ENCODE measurements at regions of chr14 and their contacts with region 1.

Region 1: GRCh38 chr14:78848234-78848820 is 678.2 kb downstream of the NRXN3 start:
- DNase-seq: peak; percentile 36
- H3K4me3 ChIP-seq: no peak overlapping the region
- H3K27ac ChIP-seq: no peak overlapping the region
- H3K4me1 ChIP-seq: no peaks in the 10 kb centered on the region
- H3K27me3 ChIP-seq: no peaks in the 10 kb centered on the region
- CTCF ChIP-seq: peak; percentile 95 to 99

Region 2: GRCh38 chr14:77862154-77862786 is 986.1 kb before region 1 on chr14:
- CTCF ChIA-PET with region 1: no interaction called
- dilution Hi-C with region 1: no loop called
- in situ Hi-C with region 1: loop called in 1 of 2 experiments (anchors 25 kb)
- intact Hi-C with region 1: no loop called
- DNase-seq: peak; percentile 21
- H3K4me3 ChIP-seq: no peak overlapping the region
- H3K27ac ChIP-seq: no peak overlapping the region
- H3K4me1 ChIP-seq: no peaks in the 10 kb centered on the region
- H3K27me3 ChIP-seq: no peaks in the 10 kb centered on the region
- CTCF ChIP-seq: peak; percentile 92 to 99

Region 3: GRCh38 chr14:78902010-78902623 is 53.8 kb after region 1 on chr14:
- CTCF ChIA-PET with region 1: no interaction called
- dilution Hi-C with region 1: no loop called
- in situ Hi-C with region 1: no loop called
- intact Hi-C with region 1: loop called (anchors 1 kb)
- DNase-seq: peak; percentile 11
- H3K4me3 ChIP-seq: no peak overlapping the region
- H3K27ac ChIP-seq: no peak overlapping the region
- H3K4me1 ChIP-seq: no peaks in the 10 kb centered on the region
- H3K27me3 ChIP-seq: no peaks in the 10 kb centered on the region
- CTCF ChIP-seq: peak; percentile 63 to 69

Region 4: GRCh38 chr14:79643132-79643531 is 794.8 kb after region 1 on chr14:
- CTCF ChIA-PET with region 1: no interaction called
- dilution Hi-C with region 1: no loop called
- in situ Hi-C with region 1: no loop called
- intact Hi-C with region 1: no loop called
- DNase-seq: no peak
- H3K4me3 ChIP-seq: no peak overlapping the region
- H3K27ac ChIP-seq: no peak overlapping the region
- H3K4me1 ChIP-seq: no peaks in the 10 kb centered on the region
- H3K27me3 ChIP-seq: no peaks in the 10 kb centered on the region
- CTCF ChIP-seq: no peak

Measured in mammary epithelial cell (primary cell).